Activated naive CD4-positive, alpha-beta T cell treated with anti-CD3 and anti-CD28 coated beads for 36 hours (primary cell): ENCODE measurements at regions of chr1 and their contacts with region 1.

Region 1: DNA sequence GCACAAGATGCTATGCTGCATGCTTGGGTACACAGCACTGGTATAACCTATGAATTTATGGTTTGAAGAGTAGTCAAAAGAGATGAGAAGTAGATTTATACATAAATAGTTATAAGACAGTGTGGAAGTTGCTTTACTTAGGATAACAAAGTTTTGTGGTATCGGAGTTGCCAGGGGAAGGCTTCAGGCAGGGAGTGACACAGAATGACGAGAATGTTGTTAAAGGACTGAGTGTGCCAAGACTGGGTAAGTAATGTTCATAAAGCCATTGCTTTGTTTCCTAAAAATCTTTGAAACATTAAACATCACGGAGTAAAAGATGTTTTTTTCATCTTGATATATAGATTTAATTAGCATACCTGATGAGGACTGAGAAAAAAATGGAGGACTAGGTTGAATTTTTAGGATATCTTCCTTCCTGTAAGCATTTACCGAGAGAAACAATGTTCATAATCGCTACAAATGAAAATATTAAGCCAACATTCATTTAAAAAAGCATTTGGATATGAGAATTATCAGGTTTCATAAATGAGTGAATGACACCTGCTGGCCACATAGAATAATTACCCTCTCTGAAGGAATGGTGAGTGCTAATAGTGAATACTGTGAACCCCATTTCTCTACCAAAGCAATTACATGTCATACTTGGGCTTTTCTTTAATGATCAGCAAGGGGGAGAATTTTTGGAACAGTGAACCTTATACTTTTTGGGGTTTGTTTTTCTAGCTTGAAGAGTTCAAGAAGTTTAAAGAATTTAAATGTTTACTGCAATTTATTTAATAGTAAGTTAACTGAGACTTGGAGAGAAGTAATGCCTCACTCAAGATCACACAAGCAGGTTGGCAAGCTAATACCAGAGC is 28.4 kb downstream of the EXTL2 start:
- DNase-seq: no peak
- H3K4me3 Mint-ChIP-seq: no peak overlapping the region
- H3K27ac Mint-ChIP-seq: no peak overlapping the region
- H3K4me1 Mint-ChIP-seq: peaks cover 2% of the 10 kb centered on the region
- H3K27me3 Mint-ChIP-seq: no peaks in the 10 kb centered on the region

Region 2: GRCh38 chr1:99180343-99180808 is 1685.9 kb before region 1 on chr1:
- CTCF ChIA-PET with region 1: no interaction called
- intact Hi-C with region 1: loop called (anchors 1 kb)
- DNase-seq: peak; percentile 83
- H3K4me3 Mint-ChIP-seq: no peak overlapping the region
- H3K27ac Mint-ChIP-seq: no peak overlapping the region
- H3K4me1 Mint-ChIP-seq: no peaks in the 10 kb centered on the region
- H3K27me3 Mint-ChIP-seq: no peaks in the 10 kb centered on the region

Region 3: GRCh38 chr1:100277866-100278265 is 588.4 kb before region 1 on chr1:
- CTCF ChIA-PET with region 1: no interaction called
- intact Hi-C with region 1: loop called (anchors 5 kb)
- DNase-seq: peak; percentile 40
- H3K4me3 Mint-ChIP-seq: no peak overlapping the region
- H3K27ac Mint-ChIP-seq: no peak overlapping the region
- H3K4me1 Mint-ChIP-seq: peaks cover 12% of the 10 kb centered on the region
- H3K27me3 Mint-ChIP-seq: no peaks in the 10 kb centered on the region

Region 4: DNA sequence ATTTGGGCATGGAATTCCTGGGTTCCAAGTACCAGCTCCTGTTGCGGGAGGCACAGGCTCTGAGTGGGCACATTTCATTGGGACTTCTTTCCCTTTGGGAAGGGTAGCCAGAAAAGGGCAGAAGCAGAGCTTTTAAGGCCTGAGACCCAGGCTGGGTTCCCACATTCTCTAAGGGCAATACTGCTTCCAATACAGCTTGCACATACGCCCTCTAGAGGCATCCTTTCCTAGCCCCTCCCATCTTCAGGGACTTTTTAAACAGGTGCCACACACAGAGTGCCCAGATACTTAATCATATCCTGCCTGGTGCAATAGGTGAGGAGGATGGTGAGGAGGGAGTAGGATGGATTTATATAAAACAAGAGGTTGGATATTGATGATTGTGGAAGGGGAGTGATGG is 322.6 kb before region 1 on chr1:
- CTCF ChIA-PET with region 1: interaction called, 11 read pairs
- intact Hi-C with region 1: loop called (anchors 2 kb)
- DNase-seq: peak; percentile 75
- H3K4me3 Mint-ChIP-seq: no peak overlapping the region
- H3K27ac Mint-ChIP-seq: no peak overlapping the region
- H3K4me1 Mint-ChIP-seq: peaks cover 2% of the 10 kb centered on the region
- H3K27me3 Mint-ChIP-seq: peaks cover 23% of the 10 kb centered on the region

Region 5: GRCh38 chr1:100606438-100606837 is 259.8 kb before region 1 on chr1:
- CTCF ChIA-PET with region 1: interaction called, 7 read pairs
- intact Hi-C with region 1: loop called (anchors 1 kb)
- DNase-seq: peak; percentile 46
- H3K4me3 Mint-ChIP-seq: no peak overlapping the region
- H3K27ac Mint-ChIP-seq: no peak overlapping the region
- H3K4me1 Mint-ChIP-seq: no peaks in the 10 kb centered on the region
- H3K27me3 Mint-ChIP-seq: peaks cover 18% of the 10 kb centered on the region

Region 6: DNA sequence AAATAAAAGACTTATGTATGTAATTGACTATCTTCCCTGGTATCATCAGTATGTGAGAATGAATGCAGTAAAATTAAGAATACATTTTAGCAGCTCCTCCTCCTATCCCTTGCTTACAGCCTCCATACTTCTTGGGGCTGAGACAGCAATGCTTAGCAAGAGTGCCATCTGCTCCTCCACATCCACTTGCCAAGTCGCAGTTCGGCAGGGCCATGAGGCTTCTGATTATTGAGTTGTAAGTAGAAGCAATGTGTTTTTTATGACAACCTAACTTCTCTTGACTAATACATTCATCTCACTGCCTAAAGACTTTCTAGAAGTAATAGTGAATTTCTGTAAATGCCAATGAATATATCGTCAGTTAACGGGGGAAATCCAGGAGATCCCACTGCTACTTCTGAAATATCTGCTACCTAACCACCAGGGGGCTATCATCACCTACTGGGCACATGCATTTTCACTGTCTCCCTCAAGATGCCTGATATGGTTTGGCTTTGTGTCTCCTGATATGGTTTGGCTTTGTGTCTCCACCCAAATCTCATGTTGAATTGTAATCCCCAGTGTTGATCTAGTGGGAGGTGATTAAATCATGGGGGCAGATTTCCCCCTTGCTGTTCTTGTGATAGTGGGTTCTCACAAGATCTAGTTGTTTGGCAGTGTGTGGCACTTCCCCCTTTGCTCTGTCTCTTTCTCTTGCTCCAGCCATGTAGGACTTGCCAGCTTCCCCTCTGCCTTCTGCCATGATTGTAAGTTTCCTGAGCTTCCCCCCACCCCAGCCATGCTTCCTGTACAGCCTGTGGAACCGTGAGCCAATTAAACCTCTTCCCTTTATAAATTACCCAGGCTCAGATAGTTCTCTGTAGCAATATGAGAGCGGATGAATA is 31.3 kb before region 1 on chr1:
- CTCF ChIA-PET with region 1: interaction called, 6 read pairs
- intact Hi-C with region 1: loop called (anchors 1 kb)
- DNase-seq: no peak
- H3K4me3 Mint-ChIP-seq: no peak overlapping the region
- H3K27ac Mint-ChIP-seq: no peak overlapping the region
- H3K4me1 Mint-ChIP-seq: no peaks in the 10 kb centered on the region
- H3K27me3 Mint-ChIP-seq: no peaks in the 10 kb centered on the region

Region 7: DNA sequence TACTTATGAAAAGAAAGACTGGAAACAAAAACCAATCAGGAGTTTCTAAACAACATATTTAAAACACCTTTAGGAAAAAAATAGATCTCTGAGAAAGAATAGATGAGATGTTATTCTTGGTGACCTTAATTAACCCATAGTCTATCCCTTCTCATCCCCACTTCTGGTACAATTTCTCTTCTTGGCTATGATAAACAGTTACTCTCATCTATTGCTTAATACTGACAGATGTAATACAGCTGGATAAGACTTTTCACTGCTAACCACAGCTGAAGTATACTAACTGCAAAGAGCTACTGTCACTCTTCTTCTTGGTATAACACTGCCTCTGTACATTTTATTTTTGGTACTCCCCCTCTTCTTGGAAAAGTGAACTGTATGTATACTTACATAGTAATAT is 13.2 kb after region 1 on chr1:
- CTCF ChIA-PET with region 1: interaction called, 24 read pairs
- intact Hi-C with region 1: no loop called
- DNase-seq: no peak
- H3K4me3 Mint-ChIP-seq: no peak overlapping the region
- H3K27ac Mint-ChIP-seq: no peak overlapping the region
- H3K4me1 Mint-ChIP-seq: no peaks in the 10 kb centered on the region
- H3K27me3 Mint-ChIP-seq: no peaks in the 10 kb centered on the region

Region 8: DNA sequence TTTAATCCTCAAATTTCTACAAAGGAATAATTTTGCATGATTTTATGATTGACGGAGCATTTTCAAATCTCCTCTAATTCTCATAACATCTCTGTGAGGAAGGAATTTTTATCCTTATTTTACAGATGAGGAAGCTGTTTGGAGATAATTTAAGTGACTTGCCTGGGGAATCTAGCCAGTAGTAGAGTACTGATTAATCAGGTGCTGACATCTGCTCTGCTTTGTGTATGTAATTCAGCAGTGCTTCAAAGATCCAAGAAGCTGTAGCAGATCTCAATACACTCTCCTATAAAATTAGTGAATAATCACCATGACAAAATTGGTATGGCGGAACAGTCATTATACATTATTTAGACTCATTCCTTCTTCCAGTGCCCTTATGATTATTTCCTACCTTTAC is 113.4 kb after region 1 on chr1:
- CTCF ChIA-PET with region 1: no interaction called
- intact Hi-C with region 1: no loop called
- DNase-seq: no peak
- H3K4me3 Mint-ChIP-seq: no peak overlapping the region
- H3K27ac Mint-ChIP-seq: no peak overlapping the region
- H3K4me1 Mint-ChIP-seq: peaks cover 6% of the 10 kb centered on the region
- H3K27me3 Mint-ChIP-seq: no peaks in the 10 kb centered on the region

Region 9: GRCh38 chr1:101148980-101149379 is 282.7 kb after region 1 on chr1:
- CTCF ChIA-PET with region 1: no interaction called
- intact Hi-C with region 1: no loop called
- DNase-seq: no peak
- H3K4me3 Mint-ChIP-seq: no peak overlapping the region
- H3K27ac Mint-ChIP-seq: peak overlapping the region; percentile 33
- H3K4me1 Mint-ChIP-seq: peaks cover 49% of the 10 kb centered on the region
- H3K27me3 Mint-ChIP-seq: no peaks in the 10 kb centered on the region